Lower leg skin (tissue), 4 donors: ENCODE measurements at regions of chr16 and their contacts with region 1.

Region 1: GRCh38 chr16:66869424-66869823 is 10.9 kb upstream of the PDP2 start:
- DNase-seq: no peak
- H3K4me3 ChIP-seq: no peak overlapping the region
- CTCF ChIP-seq: no peak
- POLR2A ChIP-seq: no peak

Region 2: GRCh38 chr16:66728117-66728787 is 141.2 kb before region 1 on chr16:
- intact Hi-C with region 1: loop called (anchors 5 kb)
- DNase-seq: no peak
- H3K4me3 ChIP-seq: no peak overlapping the region
- CTCF ChIP-seq: no peak
- POLR2A ChIP-seq: no peak